Activated CD4-positive, alpha-beta memory T cell treated with anti-CD3 and anti-CD28 coated beads, Interleukin-2, amount 10 ng/mL, durations not matched to agents 7 days and 5 days (primary cell): ENCODE measurements at regions of chr1 and their contacts with region 1.

Region 1: GRCh38 chr1:26864610-26865527 is 1.9 kb downstream of the SFN start:
- DNase-seq: peak; percentile 97
- H3K4me3 Mint-ChIP-seq: peak overlapping the region; percentile 90
- H3K27ac Mint-ChIP-seq: peak overlapping the region; percentile 93
- H3K4me1 Mint-ChIP-seq: peaks cover 37% of the 10 kb centered on the region
- H3K27me3 Mint-ChIP-seq: no peaks in the 10 kb centered on the region

Region 2: DNA sequence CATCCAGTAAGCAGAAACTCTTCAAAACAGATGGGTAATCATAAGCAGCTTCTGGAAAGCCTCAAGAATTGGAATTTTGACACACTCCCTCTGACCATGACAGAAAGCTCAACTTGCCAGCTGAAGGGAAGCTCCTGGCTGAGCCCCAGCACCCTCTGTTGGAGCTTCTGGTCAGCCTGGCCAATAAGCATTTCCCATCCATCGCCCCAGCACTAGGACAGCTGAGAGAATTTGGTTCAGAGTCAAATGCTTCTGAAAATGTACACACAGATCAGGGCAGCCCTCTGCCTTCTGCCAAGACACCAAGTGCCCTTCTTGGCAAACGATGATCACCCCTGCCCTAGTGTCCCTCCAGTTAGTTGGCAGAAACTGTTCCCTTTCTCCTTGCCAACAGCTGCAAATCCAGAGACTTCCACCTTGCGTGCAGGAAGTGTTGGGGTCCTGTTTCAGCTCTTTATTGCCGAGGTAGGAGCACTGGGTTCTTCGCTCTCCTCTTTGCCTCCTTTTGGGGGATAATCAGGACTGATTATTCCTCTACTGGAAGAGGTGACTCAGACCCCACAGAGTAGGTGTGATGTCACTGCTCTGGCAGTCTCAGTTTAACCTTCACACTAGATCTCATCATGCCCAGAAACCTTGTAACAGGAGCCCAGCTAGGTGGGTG is 65.3 kb before region 1 on chr1:
- CTCF ChIA-PET with region 1: interaction called, 8 read pairs
- POLR2A ChIA-PET with region 1: interaction called, 14 read pairs
- DNase-seq: peak; percentile 30
- H3K4me3 Mint-ChIP-seq: peak overlapping the region; percentile 52
- H3K27ac Mint-ChIP-seq: peak overlapping the region; percentile 89
- H3K4me1 Mint-ChIP-seq: peaks cover 55% of the 10 kb centered on the region
- H3K27me3 Mint-ChIP-seq: no peaks in the 10 kb centered on the region

Region 3: GRCh38 chr1:26826261-26827105 is 38.4 kb before region 1 on chr1 and contains the start of gene ZDHHC18:
- CTCF ChIA-PET with region 1: interaction called, 22 read pairs
- POLR2A ChIA-PET with region 1: interaction called, 40 read pairs
- DNase-seq: peak; percentile 78
- H3K4me3 Mint-ChIP-seq: peak within 1 kb of the TSS; percentile 98
- H3K27ac Mint-ChIP-seq: peak within 1 kb of the TSS; percentile 90
- H3K4me1 Mint-ChIP-seq: peaks cover 57% of the 10 kb centered on the region
- H3K27me3 Mint-ChIP-seq: no peaks in the 10 kb centered on the region
- total RNA-seq, gene ZDHHC18: 73.3 to 76.3 TPM

Region 4: GRCh38 chr1:26874896-26875295 is 10.0 kb after region 1 on chr1:
- CTCF ChIA-PET with region 1: interaction called, 18 read pairs
- POLR2A ChIA-PET with region 1: interaction called, 13 read pairs
- DNase-seq: no peak
- H3K4me3 Mint-ChIP-seq: no peak overlapping the region
- H3K27ac Mint-ChIP-seq: no peak overlapping the region
- H3K4me1 Mint-ChIP-seq: peaks cover 10% of the 10 kb centered on the region
- H3K27me3 Mint-ChIP-seq: no peaks in the 10 kb centered on the region

Region 5: GRCh38 chr1:26889551-26890466 is 24.9 kb after region 1 on chr1 and contains the start of gene GPN2:
- CTCF ChIA-PET with region 1: interaction called, 8 read pairs
- POLR2A ChIA-PET with region 1: interaction called, 70 read pairs
- DNase-seq: peak; percentile 82
- H3K4me3 Mint-ChIP-seq: peak within 1 kb of the TSS; percentile 99
- H3K27ac Mint-ChIP-seq: peak within 1 kb of the TSS; percentile 94
- H3K4me1 Mint-ChIP-seq: peaks cover 28% of the 10 kb centered on the region
- H3K27me3 Mint-ChIP-seq: no peaks in the 10 kb centered on the region
- total RNA-seq, gene GPN2: 29.4 to 31.4 TPM